BJ (cell line): ENCODE measurements at regions of chr15 and their contacts with region 1.

Region 1: DNA sequence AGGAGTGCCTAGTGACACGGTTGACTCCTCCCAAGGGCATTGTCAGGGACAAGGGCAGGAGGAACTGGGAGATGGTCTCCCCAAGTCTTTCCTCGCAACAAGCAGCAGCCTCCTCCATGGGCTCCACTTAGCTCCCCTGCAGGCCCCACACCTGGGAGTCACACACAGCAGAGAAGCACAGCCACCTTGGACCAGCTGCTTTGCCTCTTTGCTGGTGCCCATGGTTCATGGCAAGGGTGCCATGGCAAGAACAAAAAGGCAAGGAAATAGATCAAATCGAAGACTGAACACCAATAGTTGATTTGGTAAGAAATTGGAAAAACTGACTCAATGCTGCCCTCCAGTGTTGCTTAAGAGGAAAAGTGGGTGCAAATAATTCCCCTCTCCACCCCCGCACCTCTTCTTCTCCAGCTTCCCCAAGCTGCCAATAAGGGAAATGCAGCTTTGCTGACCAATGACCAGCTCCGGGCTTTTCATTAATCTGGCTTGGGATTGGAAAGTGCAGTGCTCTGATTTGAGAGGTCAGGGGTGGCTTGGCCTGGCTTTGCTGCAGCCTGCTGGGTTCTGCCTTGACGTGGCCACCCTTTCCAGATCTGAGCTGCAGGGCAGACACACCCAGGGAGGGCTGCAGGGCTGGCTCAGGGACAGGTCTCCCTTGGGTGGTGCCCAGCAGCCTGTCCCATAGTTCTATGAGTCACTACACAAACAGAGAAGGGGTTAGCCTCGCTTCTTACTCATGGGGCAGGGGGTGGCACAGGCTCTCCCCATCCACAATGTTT is 162.0 kb downstream of the KLF13 start:
- DNase-seq: no peak
- H3K4me3 ChIP-seq: no peak overlapping the region
- H3K27me3 ChIP-seq: peaks cover 3% of the 10 kb centered on the region; the same call in 1 of the 2 replicates
- CTCF ChIP-seq: peak; percentile 90

Region 2: DNA sequence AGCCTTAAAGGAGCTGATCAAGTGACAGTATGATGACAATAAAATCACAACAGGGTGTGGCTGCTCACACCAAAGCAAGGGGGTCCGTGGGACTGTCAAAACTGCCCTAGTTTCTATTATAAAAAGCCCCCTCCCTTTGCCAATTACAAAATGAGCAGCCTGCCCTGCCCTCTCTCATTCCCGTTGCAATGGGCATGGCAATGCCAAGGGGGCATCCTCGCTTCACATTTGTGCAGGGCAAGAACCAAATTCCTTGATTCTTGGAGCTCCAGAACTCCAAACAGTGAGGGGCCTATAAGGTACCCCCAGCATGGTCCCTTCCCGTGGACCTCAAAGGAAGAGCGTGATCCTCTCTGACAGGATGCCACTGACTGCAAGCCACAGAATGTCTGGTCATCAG is 282.2 kb before region 1 on chr15:
- CTCF ChIA-PET with region 1: interaction called, 107 read pairs
- POLR2A ChIA-PET with region 1: no interaction called
- DNase-seq: no peak
- H3K4me3 ChIP-seq: no peak overlapping the region
- H3K27me3 ChIP-seq: peaks cover 7% of the 10 kb centered on the region
- CTCF ChIP-seq: no peak

Region 3: GRCh38 chr15:31352911-31353811 is 135.5 kb before region 1 on chr15:
- CTCF ChIA-PET with region 1: interaction called, 11 read pairs
- POLR2A ChIA-PET with region 1: no interaction called
- DNase-seq: peak; percentile 81
- H3K4me3 ChIP-seq: no peak overlapping the region
- H3K27me3 ChIP-seq: no peaks in the 10 kb centered on the region
- CTCF ChIP-seq: no peak

Region 4: GRCh38 chr15:31435261-31435911 is 53.2 kb before region 1 on chr15:
- CTCF ChIA-PET with region 1: interaction called, 139 read pairs
- POLR2A ChIA-PET with region 1: no interaction called
- DNase-seq: peak; percentile 50
- H3K4me3 ChIP-seq: no peak overlapping the region
- H3K27me3 ChIP-seq: no peaks in the 10 kb centered on the region
- CTCF ChIP-seq: peak; percentile 85

Region 5: GRCh38 chr15:31472636-31473384 is 15.8 kb before region 1 on chr15:
- CTCF ChIA-PET with region 1: interaction called, 48 read pairs
- POLR2A ChIA-PET with region 1: no interaction called
- DNase-seq: no peak
- H3K4me3 ChIP-seq: no peak overlapping the region
- H3K27me3 ChIP-seq: no peaks in the 10 kb centered on the region
- CTCF ChIP-seq: no peak

Region 6: DNA sequence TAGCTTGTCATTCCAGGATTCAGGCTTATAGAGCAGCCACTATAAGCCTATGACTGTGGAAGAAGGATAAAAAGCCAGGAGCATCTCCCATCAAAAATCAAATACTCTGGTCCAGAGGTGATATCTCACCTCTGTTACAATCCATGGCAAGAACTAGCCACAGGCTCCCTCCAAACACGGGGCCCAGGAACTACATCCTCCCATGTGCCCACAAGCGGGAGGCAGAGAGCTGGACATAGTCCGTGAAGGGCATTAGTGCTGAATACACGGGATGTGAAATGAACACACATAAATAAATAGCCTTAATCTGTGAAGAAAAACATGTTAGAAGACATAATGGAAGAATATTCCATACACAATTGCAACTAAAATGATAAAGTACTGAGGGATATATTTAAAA is 87.0 kb after region 1 on chr15:
- CTCF ChIA-PET with region 1: no interaction called
- POLR2A ChIA-PET with region 1: no interaction called
- DNase-seq: no peak
- H3K4me3 ChIP-seq: no peak overlapping the region
- H3K27me3 ChIP-seq: no peaks in the 10 kb centered on the region
- CTCF ChIP-seq: no peak